GM10248 (cell line): ENCODE measurements at regions of chrX and their contacts with region 1.

Region 1: GRCh38 chrX:101390664-101391525 is at the start of gene RPL36A:
- DNase-seq: peak; percentile 78
- CTCF ChIP-seq: peak; percentile 63

Region 2: DNA sequence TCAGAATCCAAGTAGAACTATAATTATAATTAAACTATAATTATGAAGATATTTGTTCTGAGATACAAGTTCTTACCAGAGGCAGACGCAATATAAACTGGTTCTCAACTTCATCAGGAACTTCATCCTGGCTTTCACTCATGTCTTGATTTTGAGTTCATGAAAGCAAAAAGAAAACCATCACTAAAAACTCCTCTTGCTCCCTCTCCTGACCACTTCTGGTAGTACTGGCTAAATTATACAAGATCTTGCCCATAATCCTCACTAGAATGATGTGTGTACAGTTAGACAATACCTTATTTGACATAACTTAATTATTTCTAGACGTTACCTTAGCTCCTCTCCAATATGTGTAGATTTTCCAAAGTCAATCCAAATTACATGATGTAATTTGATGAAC is 103.5 kb before region 1 on chrX:
- CTCF ChIA-PET with region 1: no interaction called
- POLR2A ChIA-PET with region 1: no interaction called
- DNase-seq: peak; percentile 28
- CTCF ChIP-seq: peak; percentile 43

Region 3: GRCh38 chrX:101407748-101408531 is 17.0 kb after region 1 on chrX and contains the starts of genes GLA and HNRNPH2:
- CTCF ChIA-PET with region 1: interaction called, 18 read pairs
- POLR2A ChIA-PET with region 1: interaction called, 8 read pairs
- DNase-seq: peak; percentile 82
- CTCF ChIP-seq: no peak

Region 4: DNA sequence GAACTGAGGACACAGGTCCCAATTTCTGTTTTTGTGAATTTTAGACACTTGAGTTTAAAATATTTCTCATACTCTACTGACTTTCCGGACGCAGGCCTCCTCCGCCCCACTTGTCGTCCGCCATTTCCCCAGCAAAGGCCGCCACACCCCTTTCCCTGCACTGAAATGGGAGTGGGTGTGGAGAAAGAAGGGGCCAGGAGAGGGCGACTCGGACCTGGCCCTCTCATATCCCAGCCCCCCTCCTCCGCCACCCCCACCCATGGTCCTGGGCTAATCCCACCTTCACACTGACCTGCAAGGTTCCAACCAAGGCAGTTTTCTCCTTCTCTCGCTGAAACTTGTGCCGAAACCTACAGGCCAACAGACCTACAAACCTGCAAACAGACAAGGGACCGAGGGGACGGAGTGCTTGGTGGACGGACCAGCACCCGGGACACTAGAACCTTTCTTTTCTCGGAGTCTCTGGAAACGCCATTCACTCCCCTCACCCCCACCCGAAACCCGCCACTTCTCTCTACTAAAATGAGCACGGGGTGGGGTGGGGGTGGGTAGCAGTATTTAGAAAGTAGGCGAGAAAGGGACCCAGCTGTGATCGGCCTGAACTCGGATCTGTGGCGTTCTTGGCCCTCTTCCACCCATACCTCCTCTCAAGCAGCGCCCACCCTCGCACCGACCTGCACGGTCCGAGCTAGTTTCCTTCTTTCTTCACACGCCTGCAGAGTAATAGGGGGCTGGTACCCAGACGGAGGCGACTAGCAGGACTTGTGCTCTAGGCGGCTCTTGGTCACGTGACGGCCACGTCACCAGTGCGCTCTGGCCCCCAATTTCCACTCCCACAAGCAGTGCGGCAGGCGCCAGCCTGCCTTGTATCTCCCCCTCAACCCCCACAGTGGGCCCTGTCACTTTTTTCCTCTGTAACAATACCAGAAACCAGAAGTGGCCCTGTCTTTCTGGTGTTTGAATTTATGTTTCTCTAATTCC is 226.6 kb after region 1 on chrX and contains the start of gene ARMCX6:
- CTCF ChIA-PET with region 1: no interaction called
- POLR2A ChIA-PET with region 1: no interaction called
- DNase-seq: peak; percentile 70
- CTCF ChIP-seq: peak; percentile 30